Natural killer cell (primary cell): ENCODE measurements at regions of chr6 and their contacts with region 1.

Region 1: GRCh38 chr6:24933868-24934401 is 1.8 kb downstream of the RIPOR2 start:
- DNase-seq: peak in 1 of 2 donors; percentile 84
- ATAC-seq: peak; percentile 4 to 48 (median 26)
- H3K4me3 ChIP-seq: peak overlapping the region; percentile 85
- H3K4me3 Mint-ChIP-seq: peak overlapping the region; percentile 99
- H3K27ac ChIP-seq: peak overlapping the region; percentile 67
- H3K27ac Mint-ChIP-seq: peak overlapping the region; percentile 71 to 89
- H3K4me1 ChIP-seq: peaks cover 40% of the 10 kb centered on the region
- H3K4me1 Mint-ChIP-seq: peaks cover 91 to 93% of the 10 kb centered on the region in 2 donors
- H3K27me3 ChIP-seq: no peaks in the 10 kb centered on the region
- H3K27me3 Mint-ChIP-seq: no peaks in the 10 kb centered on the region
- CTCF ChIP-seq: peak; percentile 92

Region 2: DNA sequence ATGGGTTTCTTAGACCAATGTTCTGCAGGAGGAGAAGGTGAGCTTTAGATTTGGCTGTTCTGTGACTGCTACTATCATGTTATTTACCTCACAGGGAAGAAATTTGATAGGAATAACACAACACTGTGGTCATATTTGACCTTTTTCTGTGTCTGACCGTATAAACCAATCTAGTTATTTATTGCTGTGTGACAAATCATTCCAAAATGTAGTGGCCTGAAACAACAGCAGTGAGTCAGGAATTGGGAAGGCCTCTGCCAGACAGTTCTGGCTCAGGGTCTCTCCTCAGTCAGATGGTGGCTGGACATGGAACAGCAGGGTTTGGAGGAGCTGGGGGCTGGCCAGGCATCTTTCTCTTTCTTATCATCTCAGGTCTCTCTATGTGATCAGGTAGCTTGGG is 31.2 kb before region 1 on chr6:
- intact Hi-C with region 1: loop called (anchors 5 kb)
- DNase-seq: no peak
- ATAC-seq: no peak
- H3K4me3 ChIP-seq: no peak overlapping the region
- H3K4me3 Mint-ChIP-seq: peak overlapping the region; percentile 58
- H3K27ac ChIP-seq: no peak overlapping the region
- H3K27ac Mint-ChIP-seq: peak overlapping the region; percentile 89 to 93
- H3K4me1 ChIP-seq: peaks cover 56% of the 10 kb centered on the region
- H3K4me1 Mint-ChIP-seq: peaks cover 93 to 95% of the 10 kb centered on the region in 2 donors
- H3K27me3 ChIP-seq: no peaks in the 10 kb centered on the region
- H3K27me3 Mint-ChIP-seq: no peaks in the 10 kb centered on the region
- CTCF ChIP-seq: no peak

Region 3: GRCh38 chr6:24960991-24961475 is 27.1 kb after region 1 on chr6:
- intact Hi-C with region 1: loop called (anchors 5 kb)
- DNase-seq: peak in 1 of 2 donors; percentile 66
- ATAC-seq: peak; percentile 57 to 67 (median 64)
- H3K4me3 ChIP-seq: no peak overlapping the region
- H3K4me3 Mint-ChIP-seq: peak overlapping the region; percentile 81
- H3K27ac ChIP-seq: peak overlapping the region; percentile 27
- H3K27ac Mint-ChIP-seq: peak overlapping the region; percentile 77 to 85
- H3K4me1 ChIP-seq: peaks cover 36% of the 10 kb centered on the region
- H3K4me1 Mint-ChIP-seq: peaks cover 64 to 71% of the 10 kb centered on the region in 2 donors
- H3K27me3 ChIP-seq: no peaks in the 10 kb centered on the region
- H3K27me3 Mint-ChIP-seq: no peaks in the 10 kb centered on the region
- CTCF ChIP-seq: no peak

Region 4: DNA sequence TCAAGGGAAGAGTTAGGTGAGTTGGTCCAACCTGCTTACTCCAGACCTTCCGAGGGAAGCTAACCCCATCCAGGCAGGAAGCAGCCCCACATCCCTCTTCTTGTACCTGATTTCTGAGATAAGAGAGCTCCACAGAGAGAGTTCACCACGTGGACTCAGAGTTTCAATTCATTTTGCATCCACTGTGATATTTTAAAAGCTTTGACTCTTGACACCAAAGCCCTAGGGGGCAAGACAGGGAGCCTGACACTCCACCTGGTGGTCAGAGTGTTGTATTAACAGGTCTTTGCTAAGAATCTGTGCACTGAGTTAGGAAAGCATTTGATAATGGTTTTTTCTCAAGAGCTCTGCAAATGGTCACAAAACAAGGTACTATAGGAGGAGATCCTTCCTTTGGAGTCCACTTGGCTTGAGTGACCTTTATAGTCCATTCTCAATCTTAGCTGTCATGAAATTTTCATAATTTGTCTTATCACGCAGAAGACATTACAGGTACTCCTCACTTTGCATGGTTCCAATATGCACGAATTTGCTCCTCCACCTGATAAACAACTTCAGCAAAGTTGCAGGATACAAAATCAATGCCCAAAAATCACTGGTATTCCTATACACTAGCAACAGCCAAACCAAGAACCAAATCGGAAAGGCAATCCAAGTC is 58.0 kb after region 1 on chr6:
- intact Hi-C with region 1: loop called (anchors 2 kb)
- DNase-seq: peak; percentile 47 to 91
- ATAC-seq: peak; percentile 94 to 99 (median 98)
- H3K4me3 ChIP-seq: no peak overlapping the region
- H3K4me3 Mint-ChIP-seq: peak overlapping the region; percentile 14
- H3K27ac ChIP-seq: peak overlapping the region; percentile 52
- H3K27ac Mint-ChIP-seq: peak overlapping the region; percentile 61 to 84
- H3K4me1 ChIP-seq: peaks cover 14% of the 10 kb centered on the region
- H3K4me1 Mint-ChIP-seq: peaks cover 51 to 55% of the 10 kb centered on the region in 2 donors
- H3K27me3 ChIP-seq: no peaks in the 10 kb centered on the region
- H3K27me3 Mint-ChIP-seq: no peaks in the 10 kb centered on the region
- CTCF ChIP-seq: peak; percentile 84

Region 5: GRCh38 chr6:25070547-25071366 is 136.8 kb after region 1 on chr6:
- intact Hi-C with region 1: loop called (anchors 10 kb)
- DNase-seq: peak; percentile 73 to 94
- ATAC-seq: peak; percentile 96 to 100 (median 99)
- H3K4me3 ChIP-seq: peak overlapping the region; percentile 11
- H3K4me3 Mint-ChIP-seq: peak overlapping the region; percentile 55
- H3K27ac ChIP-seq: peak overlapping the region; percentile 60
- H3K27ac Mint-ChIP-seq: peak overlapping the region; percentile 82 to 85
- H3K4me1 ChIP-seq: peaks cover 3% of the 10 kb centered on the region
- H3K4me1 Mint-ChIP-seq: peaks cover 6 to 16% of the 10 kb centered on the region in 2 donors
- H3K27me3 ChIP-seq: no peaks in the 10 kb centered on the region
- H3K27me3 Mint-ChIP-seq: no peaks in the 10 kb centered on the region
- CTCF ChIP-seq: peak; percentile 89